Breast epithelium (tissue), 4 donors: ENCODE measurements at regions of chr4 and their contacts with region 1.

Region 1: GRCh38 chr4:100414016-100414790 is 103.6 kb downstream of the EMCN start:
- DNase-seq: no peak
- H3K4me3 ChIP-seq: no peak overlapping the region
- H3K27ac ChIP-seq: no peak overlapping the region
- H3K4me1 ChIP-seq: no peaks in the 10 kb centered on the region
- H3K27me3 ChIP-seq: no peaks in the 10 kb centered on the region
- CTCF ChIP-seq: no peak
- POLR2A ChIP-seq: no peak

Region 2: GRCh38 chr4:100093091-100093866 is 320.9 kb before region 1 on chr4:
- intact Hi-C with region 1: loop called (anchors 5 kb)
- DNase-seq: peak; percentile 72 to 82
- H3K4me3 ChIP-seq: no peak overlapping the region
- H3K27ac ChIP-seq: peak overlapping the region; percentile 50 to 65
- H3K4me1 ChIP-seq: peaks cover 0 to 5% of the 10 kb centered on the region in 2 donors
- H3K27me3 ChIP-seq: no peaks in the 10 kb centered on the region
- CTCF ChIP-seq: peak; percentile 61 to 79 (median 67)
- POLR2A ChIP-seq: no peak